ENCODE measurements at regions of chr10 and their contacts with region 1.

Region 1: GRCh38 chr10:124092860-124093773 is at the start of gene CHST15:
- DNase-seq: peak; percentile 86
- ATAC-seq: peak; percentile 57
- H3K4me3 ChIP-seq: peak within 1 kb of the TSS; percentile 86 to 91 (median 91)
- H3K27ac ChIP-seq: peak within 1 kb of the TSS; percentile 59
- H3K4me1 ChIP-seq: peaks cover 76% of the 10 kb centered on the region
- H3K27me3 ChIP-seq: peaks cover 0 to 36% of the 10 kb centered on the region in 2 experiments; a peak in 3 of 5 replicates
- CTCF ChIP-seq: peak; percentile 50
- EP300 ChIP-seq: peak in 1 of 2 experiments; percentile 70; a peak in 2 of 4 replicates
- POLR2A ChIP-seq: peak in 1 of 2 experiments; percentile 68; a peak in 3 of 4 replicates
- RAD21 ChIP-seq: 0 out of 2 replicates have a peak, but pooled peaks have one; percentile 32
- total RNA-seq, gene CHST15: 1.1 and 1.4 TPM in 2 replicates

Region 2: GRCh38 chr10:124035928-124036558 is 57.1 kb before region 1 on chr10:
- CTCF ChIA-PET with region 1: no interaction called
- POLR2A ChIA-PET with region 1: interaction called, 10 read pairs
- in situ Hi-C with region 1: no loop called
- intact Hi-C with region 1: loop called (anchors 2 kb)
- DNase-seq: peak; percentile 96
- ATAC-seq: peak; percentile 96
- H3K4me3 ChIP-seq: peak overlapping the region in 1 of 3 experiments; percentile 5; a peak in 1 of 6 replicates
- H3K27ac ChIP-seq: peak overlapping the region; percentile 50
- H3K4me1 ChIP-seq: peaks cover 64% of the 10 kb centered on the region
- H3K27me3 ChIP-seq: no peaks in the 10 kb centered on the region
- CTCF ChIP-seq: peak; percentile 38; the same call in 1 of the 2 replicates
- EP300 ChIP-seq: peak in 1 of 2 experiments; percentile 92; a peak in 2 of 4 replicates
- POLR2A ChIP-seq: 0 out of 4 replicates have a peak, but pooled peaks of 1 of the 2 experiments have one; percentile 37
- RAD21 ChIP-seq: no peak

Region 3: GRCh38 chr10:124043310-124044142 is 49.6 kb before region 1 on chr10:
- CTCF ChIA-PET with region 1: no interaction called
- POLR2A ChIA-PET with region 1: interaction called, 20 read pairs
- in situ Hi-C with region 1: no loop called
- intact Hi-C with region 1: no loop called
- DNase-seq: peak; percentile 97
- ATAC-seq: peak; percentile 93
- H3K4me3 ChIP-seq: no peak overlapping the region
- H3K27ac ChIP-seq: peak overlapping the region; percentile 74
- H3K4me1 ChIP-seq: peaks cover 93% of the 10 kb centered on the region
- H3K27me3 ChIP-seq: no peaks in the 10 kb centered on the region
- CTCF ChIP-seq: peak; percentile 7; the same call in 1 of the 2 replicates
- EP300 ChIP-seq: peak in 1 of 2 experiments; percentile 94; a peak in 2 of 4 replicates
- POLR2A ChIP-seq: peak in 1 of 2 experiments; percentile 46; a peak in 1 of 4 replicates
- RAD21 ChIP-seq: no peak

Region 4: GRCh38 chr10:124138195-124138882 is 45.2 kb after region 1 on chr10:
- CTCF ChIA-PET with region 1: no interaction called
- POLR2A ChIA-PET with region 1: no interaction called
- in situ Hi-C with region 1: no loop called
- intact Hi-C with region 1: no loop called
- DNase-seq: no peak
- ATAC-seq: no peak
- H3K4me3 ChIP-seq: no peak overlapping the region
- H3K27ac ChIP-seq: no peak overlapping the region
- H3K4me1 ChIP-seq: no peaks in the 10 kb centered on the region
- H3K27me3 ChIP-seq: peaks cover 0 to 34% of the 10 kb centered on the region in 2 experiments; a peak in 3 of 5 replicates
- CTCF ChIP-seq: no peak
- EP300 ChIP-seq: no peak
- POLR2A ChIP-seq: no peak
- RAD21 ChIP-seq: no peak